Activated CD4-positive, alpha-beta T cell treated with anti-CD3 and anti-CD28 coated beads, Interleukin-2, amount 10 ng/mL, durations not matched to agents 24 days and 14 days (primary cell): ENCODE measurements at regions of chr2 and their contacts with region 1.

Region 1: DNA sequence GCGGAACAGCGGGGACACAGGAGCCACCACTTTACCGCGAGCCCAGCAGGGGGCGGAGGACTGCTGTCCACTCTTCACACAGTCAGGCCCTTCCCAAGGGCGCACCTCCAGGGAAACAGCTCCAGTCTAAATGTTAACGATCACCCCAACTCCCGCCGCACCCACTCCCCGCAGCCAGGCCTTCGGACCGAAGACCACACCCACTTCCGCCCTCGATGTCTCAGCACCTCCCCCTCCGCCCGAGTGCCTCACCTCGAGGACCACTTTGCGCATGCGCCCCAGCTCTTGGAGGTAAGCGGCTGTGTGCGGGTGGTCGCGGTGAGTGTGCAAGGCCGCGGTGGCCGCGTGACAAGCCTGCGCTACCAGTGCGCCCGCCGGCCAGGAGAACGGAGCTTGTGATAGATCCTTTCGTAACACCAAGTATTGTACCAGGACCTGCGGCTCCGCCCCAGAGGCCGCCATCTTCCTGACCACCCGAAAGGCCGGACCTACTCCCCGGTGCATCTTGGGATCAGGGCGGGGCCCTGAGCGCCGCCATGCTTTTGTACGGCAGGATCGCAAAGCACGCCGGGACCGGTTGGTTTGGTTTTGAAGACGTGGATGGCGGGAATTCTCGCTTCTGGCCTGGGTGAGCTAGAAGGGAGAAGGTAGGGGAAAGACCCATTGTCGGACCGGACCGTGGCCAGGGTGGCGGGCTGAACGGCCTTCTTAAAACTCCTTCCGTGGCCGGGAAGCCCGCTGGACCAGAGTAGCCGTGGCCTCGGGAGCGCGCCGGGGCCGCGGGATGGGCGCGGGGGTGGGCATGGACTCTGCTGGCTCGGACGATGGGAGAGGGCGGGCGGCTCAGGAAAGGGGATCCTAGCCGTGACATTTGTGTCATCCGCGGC is at the starts of genes CENPO and PTRHD1:
- DNase-seq: peak; percentile 98
- H3K4me3 Mint-ChIP-seq: peak within 1 kb of the TSS; percentile 98
- H3K27ac Mint-ChIP-seq: peak within 1 kb of the TSS; percentile 99
- H3K4me1 Mint-ChIP-seq: peaks cover 37% of the 10 kb centered on the region
- H3K27me3 Mint-ChIP-seq: peaks cover 2% of the 10 kb centered on the region
- total RNA-seq, gene CENPO: 44.0 and 45.9 TPM in 2 replicates
- total RNA-seq, gene PTRHD1: 21.7 and 22.2 TPM in 2 replicates

Region 2: GRCh38 chr2:24490674-24491625 is 302.2 kb before region 1 on chr2 and contains the start of gene NCOA1:
- intact Hi-C with region 1: loop called (anchors 2 kb)
- DNase-seq: peak; percentile 97
- H3K4me3 Mint-ChIP-seq: peak within 1 kb of the TSS; percentile 96
- H3K27ac Mint-ChIP-seq: peak within 1 kb of the TSS; percentile 92
- H3K4me1 Mint-ChIP-seq: peaks cover 40% of the 10 kb centered on the region
- H3K27me3 Mint-ChIP-seq: peaks cover 2% of the 10 kb centered on the region
- total RNA-seq, gene NCOA1: 24.6 and 25.9 TPM in 2 replicates

Region 3: GRCh38 chr2:25041928-25042320 is 248.8 kb after region 1 on chr2 and contains the start of gene EFR3B:
- intact Hi-C with region 1: loop called (anchors 5 kb)
- DNase-seq: peak; percentile 96
- H3K4me3 Mint-ChIP-seq: peak within 1 kb of the TSS; percentile 84
- H3K27ac Mint-ChIP-seq: peak within 1 kb of the TSS; percentile 49
- H3K4me1 Mint-ChIP-seq: peaks cover 22% of the 10 kb centered on the region
- H3K27me3 Mint-ChIP-seq: peaks cover 48% of the 10 kb centered on the region
- total RNA-seq, gene EFR3B: 0.09 and 0.12 TPM in 2 replicates

Region 4: GRCh38 chr2:25276569-25277465 is 483.7 kb after region 1 on chr2:
- intact Hi-C with region 1: no loop called
- DNase-seq: peak; percentile 94
- H3K4me3 Mint-ChIP-seq: peak overlapping the region; percentile 64
- H3K27ac Mint-ChIP-seq: peak overlapping the region; percentile 90
- H3K4me1 Mint-ChIP-seq: peaks cover 63% of the 10 kb centered on the region
- H3K27me3 Mint-ChIP-seq: no peaks in the 10 kb centered on the region

Region 5: DNA sequence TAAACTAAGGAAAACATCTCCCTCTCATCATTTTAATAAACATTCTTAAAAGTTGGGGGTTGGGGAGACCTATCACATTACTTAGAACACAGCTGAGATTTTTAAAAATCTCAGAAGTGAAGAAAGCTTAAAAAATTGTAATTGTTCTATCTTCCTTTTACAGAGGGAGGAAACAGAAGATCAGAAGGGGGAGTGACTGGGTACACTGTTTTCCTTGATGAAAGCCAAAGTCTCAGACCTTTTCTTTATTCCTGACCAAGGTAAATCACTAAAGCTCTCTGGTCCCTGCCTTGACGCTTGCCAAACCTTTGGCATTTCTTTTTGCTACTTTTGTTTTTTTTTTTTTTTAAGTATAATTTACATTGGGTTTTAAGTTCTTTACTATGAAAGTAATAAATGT is 965.2 kb after region 1 on chr2:
- intact Hi-C with region 1: no loop called
- DNase-seq: no peak
- H3K4me3 Mint-ChIP-seq: no peak overlapping the region
- H3K27ac Mint-ChIP-seq: no peak overlapping the region
- H3K4me1 Mint-ChIP-seq: peaks cover 21% of the 10 kb centered on the region
- H3K27me3 Mint-ChIP-seq: no peaks in the 10 kb centered on the region